OCI-LY7 (cell line): ENCODE measurements at regions of chr10 and their contacts with region 1.

Region 1: DNA sequence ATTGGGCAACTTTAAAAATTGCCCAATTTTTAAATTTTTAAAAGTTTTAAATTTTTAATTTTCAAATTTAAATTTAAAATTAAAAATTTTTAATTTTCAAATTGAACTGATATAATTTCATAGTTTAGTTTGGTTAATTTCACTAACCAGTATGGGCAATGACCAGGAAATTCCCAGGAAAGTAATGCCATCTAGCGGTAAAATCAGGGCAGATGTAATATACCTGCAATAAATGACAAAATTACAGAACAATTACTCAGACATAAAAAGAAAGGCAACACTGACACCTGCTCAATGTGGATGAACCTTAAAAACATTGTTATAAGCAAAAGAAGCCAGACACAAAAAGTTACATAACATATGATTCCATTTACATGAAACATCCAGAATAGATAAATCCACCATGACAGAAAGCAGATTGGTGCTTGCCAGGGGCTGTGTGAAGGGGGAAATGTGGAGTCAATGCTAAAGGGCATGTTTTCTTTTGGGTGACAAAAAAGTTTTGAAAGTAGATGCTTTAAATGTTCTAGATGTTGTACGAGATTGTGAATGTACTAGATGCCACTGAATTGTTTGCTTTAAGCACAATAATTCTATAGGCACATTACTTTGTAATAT is 28.6 kb upstream of the SLC16A12 start:
- DNase-seq: peak; percentile 57
- H3K4me3 ChIP-seq: no peak overlapping the region
- H3K27ac ChIP-seq: no peak overlapping the region
- H3K4me1 ChIP-seq: no peaks in the 10 kb centered on the region
- CTCF ChIP-seq: peak; percentile 90

Region 2: GRCh38 chr10:89398003-89398749 is 165.8 kb before region 1 on chr10:
- CTCF ChIA-PET with region 1: no interaction called
- POLR2A ChIA-PET with region 1: no interaction called
- intact Hi-C with region 1: no loop called
- DNase-seq: no peak
- H3K4me3 ChIP-seq: no peak overlapping the region
- H3K27ac ChIP-seq: no peak overlapping the region
- H3K4me1 ChIP-seq: no peaks in the 10 kb centered on the region
- CTCF ChIP-seq: no peak

Region 3: DNA sequence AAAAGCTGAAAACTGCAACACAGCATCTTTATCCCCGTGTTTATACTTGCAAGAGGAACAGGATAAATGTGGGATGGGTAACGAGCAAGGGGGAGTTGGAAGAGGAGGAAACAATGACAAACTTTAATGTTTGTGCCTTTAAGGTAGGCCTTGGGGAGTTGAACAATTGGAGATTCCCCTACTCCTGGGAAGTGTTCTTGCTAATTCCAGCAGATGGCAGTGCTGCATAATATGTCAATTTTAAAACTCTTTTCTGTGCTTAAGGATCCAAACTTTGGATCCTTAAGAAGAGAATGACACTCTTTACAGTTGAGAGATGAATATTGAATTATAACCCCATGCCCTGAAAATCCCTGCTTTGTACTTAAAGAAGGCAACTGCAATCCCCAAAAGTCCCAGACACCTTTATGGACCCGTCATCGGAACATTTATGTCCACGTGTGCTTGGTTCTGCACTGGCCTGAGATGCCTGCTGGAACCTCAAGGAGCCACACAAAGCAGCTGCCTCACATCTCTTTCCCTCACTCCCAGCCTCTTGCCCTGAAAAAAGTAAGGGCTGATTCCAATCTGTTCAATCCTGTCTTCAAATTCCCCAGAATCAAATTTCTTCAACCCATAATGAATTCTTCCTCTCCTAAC is 137.6 kb before region 1 on chr10:
- CTCF ChIA-PET with region 1: no interaction called
- POLR2A ChIA-PET with region 1: no interaction called
- intact Hi-C with region 1: loop called (anchors 1 kb)
- DNase-seq: peak; percentile 51
- H3K4me3 ChIP-seq: no peak overlapping the region
- H3K27ac ChIP-seq: no peak overlapping the region
- H3K4me1 ChIP-seq: no peaks in the 10 kb centered on the region
- CTCF ChIP-seq: peak; percentile 80